CD8-positive, alpha-beta memory T cell (primary cell): ENCODE measurements at regions of chr17 and their contacts with region 1.

Region 1: GRCh38 chr17:38557836-38558727 is 47.7 kb downstream of the SRCIN1 start:
- DNase-seq: peak; percentile 82 to 89 (median 83)
- H3K4me3 ChIP-seq: peak overlapping the region; percentile 89
- H3K4me3 Mint-ChIP-seq: peak overlapping the region; percentile 93 to 99 (median 98)
- H3K27ac ChIP-seq: no peak overlapping the region
- H3K27ac Mint-ChIP-seq: peak overlapping the region in 5 of 8 donors; percentile 14 to 94 (median 82)
- H3K4me1 ChIP-seq: peaks cover 22% of the 10 kb centered on the region
- H3K4me1 Mint-ChIP-seq: peaks cover 22 to 39% (median 24%) of the 10 kb centered on the region in 3 donors
- H3K27me3 ChIP-seq: peaks cover 30% of the 10 kb centered on the region
- H3K27me3 Mint-ChIP-seq: peaks cover 27 to 29% of the 10 kb centered on the region in 2 donors

Region 2: GRCh38 chr17:38485146-38485468 is 73.0 kb before region 1 on chr17:
- CTCF ChIA-PET with region 1: no interaction called
- POLR2A ChIA-PET with region 1: no interaction called
- DNase-seq: no peak
- H3K4me3 ChIP-seq: no peak overlapping the region
- H3K4me3 Mint-ChIP-seq: peak overlapping the region in 4 of 7 donors; percentile 27 to 61 (median 50)
- H3K27ac ChIP-seq: no peak overlapping the region
- H3K27ac Mint-ChIP-seq: peak overlapping the region in 5 of 8 donors; percentile 8 to 84 (median 69)
- H3K4me1 ChIP-seq: no peaks in the 10 kb centered on the region
- H3K4me1 Mint-ChIP-seq: peaks cover 10 to 14% (median 12%) of the 10 kb centered on the region in 3 donors
- H3K27me3 ChIP-seq: no peaks in the 10 kb centered on the region
- H3K27me3 Mint-ChIP-seq: peaks cover 5 to 21% of the 10 kb centered on the region in 2 donors

Region 3: DNA sequence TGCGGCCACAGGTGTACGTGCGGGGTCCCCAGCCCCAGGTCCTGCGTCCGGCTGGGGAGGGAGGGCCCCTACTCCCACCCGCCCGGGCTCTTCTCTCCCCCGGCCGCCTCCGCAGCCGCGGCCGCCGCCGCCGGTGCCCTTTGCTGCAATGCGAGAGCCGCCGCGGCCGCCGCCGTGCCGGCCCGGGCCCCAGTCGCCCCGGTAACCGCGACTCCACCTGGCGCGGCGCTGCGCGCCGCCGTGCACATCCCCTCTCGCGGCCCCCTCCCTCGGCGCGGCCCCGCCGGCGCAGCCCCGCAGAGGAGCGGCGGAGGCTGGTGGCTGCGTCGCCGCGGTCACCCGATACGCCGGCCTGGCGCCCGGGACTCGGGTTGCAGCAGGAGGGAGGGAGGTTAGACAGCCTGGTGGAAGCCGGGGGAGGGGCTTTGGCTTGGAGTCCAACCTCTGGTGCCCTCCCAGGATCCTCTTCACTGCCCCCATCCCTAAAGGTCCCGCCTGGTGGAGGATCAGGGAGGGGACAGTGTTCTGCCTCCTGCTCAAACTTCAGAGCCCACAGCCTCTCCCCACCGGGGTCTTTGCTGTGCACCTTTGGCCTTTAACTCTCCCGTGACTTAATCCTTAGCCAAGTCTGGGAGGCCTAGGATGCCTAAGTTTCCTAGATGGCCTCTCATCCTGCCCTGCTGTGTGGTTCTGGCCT is 14.7 kb after region 1 on chr17:
- CTCF ChIA-PET with region 1: interaction called, 29 read pairs
- POLR2A ChIA-PET with region 1: no interaction called
- DNase-seq: no peak
- H3K4me3 ChIP-seq: no peak overlapping the region
- H3K4me3 Mint-ChIP-seq: peak overlapping the region in 6 of 7 donors; percentile 55 to 79 (median 66)
- H3K27ac ChIP-seq: no peak overlapping the region
- H3K27ac Mint-ChIP-seq: no peak overlapping the region
- H3K4me1 ChIP-seq: peaks cover 5% of the 10 kb centered on the region
- H3K4me1 Mint-ChIP-seq: peaks cover 8 to 12% (median 9%) of the 10 kb centered on the region in 3 donors
- H3K27me3 ChIP-seq: peaks cover 78% of the 10 kb centered on the region
- H3K27me3 Mint-ChIP-seq: peaks cover 83 to 89% of the 10 kb centered on the region in 2 donors

Region 4: DNA sequence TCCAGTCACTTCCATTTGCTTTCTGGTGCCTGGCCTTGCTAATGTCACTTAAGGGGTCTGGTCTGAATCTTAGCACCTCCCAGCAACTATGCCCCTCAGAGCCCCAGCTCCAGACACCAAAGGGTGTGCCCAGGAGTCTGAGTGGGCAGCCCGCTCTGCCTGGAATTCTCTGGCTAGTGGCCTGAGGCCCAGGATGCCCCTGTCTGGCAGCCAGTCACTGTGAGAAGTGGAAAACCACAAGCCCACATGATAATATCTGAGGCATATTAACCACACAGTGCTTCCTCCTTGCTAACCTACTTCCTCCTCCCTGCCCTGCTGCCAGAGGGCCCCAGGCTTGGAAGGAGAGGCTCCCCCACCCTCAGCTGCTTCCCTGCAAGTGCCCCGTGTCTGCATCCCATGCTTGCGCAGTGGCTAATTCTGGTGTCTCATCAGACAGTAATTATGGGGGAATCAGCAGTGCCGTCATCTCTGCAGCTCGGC is 33.7 kb after region 1 on chr17:
- CTCF ChIA-PET with region 1: interaction called, 128 read pairs
- POLR2A ChIA-PET with region 1: no interaction called
- DNase-seq: peak in 1 of 5 donors; percentile 30
- H3K4me3 ChIP-seq: no peak overlapping the region
- H3K4me3 Mint-ChIP-seq: peak overlapping the region in 6 of 7 donors; percentile 47 to 84 (median 57)
- H3K27ac ChIP-seq: no peak overlapping the region
- H3K27ac Mint-ChIP-seq: peak overlapping the region in 3 of 8 donors; percentile 33 to 63 (median 36)
- H3K4me1 ChIP-seq: peaks cover 20% of the 10 kb centered on the region
- H3K4me1 Mint-ChIP-seq: peaks cover 22 to 32% (median 29%) of the 10 kb centered on the region in 3 donors
- H3K27me3 ChIP-seq: peaks cover 57% of the 10 kb centered on the region
- H3K27me3 Mint-ChIP-seq: peaks cover 50 to 85% of the 10 kb centered on the region in 2 donors

Region 5: DNA sequence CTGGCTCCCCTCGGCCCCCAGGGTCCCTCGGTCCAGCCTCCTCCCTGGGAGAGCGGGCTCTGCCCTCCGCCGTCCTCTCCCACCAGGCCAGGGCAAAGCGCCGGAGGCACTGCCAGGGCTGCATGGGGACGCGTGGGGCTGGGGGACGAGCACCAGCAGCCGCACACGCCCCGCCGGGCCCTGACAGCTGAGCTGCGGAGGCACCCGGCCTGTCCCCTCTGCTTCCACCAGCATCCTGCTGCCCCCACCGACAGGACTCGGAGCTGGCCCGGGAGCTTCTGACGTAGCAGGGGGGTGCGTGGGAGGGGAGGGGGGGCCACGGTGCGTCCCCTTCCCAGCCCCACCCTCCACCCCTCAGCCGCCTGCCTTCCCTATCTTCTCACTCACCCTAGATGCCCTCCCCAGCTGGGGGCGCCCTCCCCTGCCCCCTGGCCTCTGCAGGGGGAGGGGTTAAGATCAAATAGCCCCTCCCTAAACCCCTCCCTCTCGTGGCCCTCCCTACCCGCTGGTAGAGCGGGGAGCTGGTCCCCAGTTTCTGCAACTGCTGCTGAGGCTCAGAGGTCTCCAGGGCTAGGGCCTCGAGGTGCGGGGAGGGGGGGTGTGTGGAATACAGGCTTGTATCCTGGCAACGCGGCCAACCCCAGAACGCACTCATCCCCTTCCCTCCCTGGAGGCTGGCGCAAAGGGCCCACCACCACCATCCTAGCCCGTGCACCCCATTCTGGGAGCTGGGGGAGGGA is 46.6 kb after region 1 on chr17:
- CTCF ChIA-PET with region 1: interaction called, 18 read pairs
- POLR2A ChIA-PET with region 1: no interaction called
- DNase-seq: peak in 1 of 5 donors; percentile 15
- H3K4me3 ChIP-seq: no peak overlapping the region
- H3K4me3 Mint-ChIP-seq: peak overlapping the region in 6 of 7 donors; percentile 36 to 66 (median 51)
- H3K27ac ChIP-seq: no peak overlapping the region
- H3K27ac Mint-ChIP-seq: peak overlapping the region in 1 of 8 donors; percentile 38
- H3K4me1 ChIP-seq: peaks cover 9% of the 10 kb centered on the region
- H3K4me1 Mint-ChIP-seq: peaks cover 8 to 36% (median 12%) of the 10 kb centered on the region in 3 donors
- H3K27me3 ChIP-seq: peaks cover 36% of the 10 kb centered on the region
- H3K27me3 Mint-ChIP-seq: peaks cover 42 to 71% of the 10 kb centered on the region in 2 donors

Region 6: DNA sequence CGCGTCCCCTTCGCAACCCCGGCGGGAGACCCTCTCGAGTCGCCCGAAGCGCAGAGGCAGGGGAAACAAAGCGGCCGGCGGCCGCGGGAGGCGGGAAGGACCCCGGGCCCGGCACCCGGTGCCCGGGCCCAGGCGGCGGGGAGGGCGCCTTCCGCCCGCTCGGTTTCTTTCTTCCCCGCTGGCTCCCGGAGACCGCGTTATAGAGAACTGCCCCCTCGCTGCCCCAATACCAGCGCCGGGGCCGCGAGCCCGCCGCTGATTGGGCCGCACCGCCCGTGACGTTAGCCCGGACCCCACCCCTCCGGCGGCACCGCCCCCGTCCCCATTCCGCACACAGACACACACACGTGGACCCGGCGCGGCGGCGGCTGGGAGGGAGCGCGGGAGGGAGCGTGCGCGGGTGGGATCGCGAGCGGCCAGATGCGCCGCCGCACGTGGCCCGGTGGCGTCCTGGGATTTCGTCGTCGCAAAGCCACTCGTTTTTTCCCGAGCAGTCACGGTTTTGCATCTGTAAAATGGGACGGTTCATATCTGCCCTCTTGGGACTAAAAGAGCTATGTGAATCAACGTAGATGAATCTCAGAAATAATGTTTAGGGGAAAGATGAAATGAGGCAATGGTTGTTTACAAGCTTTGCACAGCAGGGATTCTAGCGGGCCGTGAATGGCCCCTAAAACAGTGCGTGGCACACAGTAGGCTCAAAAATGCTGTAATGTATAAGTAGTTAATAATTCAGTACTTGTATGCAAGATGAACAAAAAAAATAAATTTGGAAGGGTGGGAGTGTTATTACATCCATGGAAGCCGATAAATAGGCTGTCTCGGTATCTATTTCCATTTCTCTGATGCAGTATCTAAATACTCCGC is 116.9 kb after region 1 on chr17 and contains the start of gene EPOP:
- CTCF ChIA-PET with region 1: interaction called, 69 read pairs
- POLR2A ChIA-PET with region 1: no interaction called
- DNase-seq: peak; percentile 75 to 82 (median 81)
- H3K4me3 ChIP-seq: peak within 1 kb of the TSS; percentile 5
- H3K4me3 Mint-ChIP-seq: peak within 1 kb of the TSS; percentile 49 to 83 (median 67)
- H3K27ac ChIP-seq: no peak within 1 kb of the TSS
- H3K27ac Mint-ChIP-seq: peak within 1 kb of the TSS in 2 of 8 donors; percentile 19 to 39
- H3K4me1 ChIP-seq: peaks cover 7% of the 10 kb centered on the region
- H3K4me1 Mint-ChIP-seq: peaks cover 13 to 21% (median 16%) of the 10 kb centered on the region in 3 donors
- H3K27me3 ChIP-seq: peaks cover 14% of the 10 kb centered on the region
- H3K27me3 Mint-ChIP-seq: peaks cover 25 to 43% of the 10 kb centered on the region in 2 donors
- total RNA-seq, gene EPOP: 47.0 to 50.0 TPM

Region 7: GRCh38 chr17:38735161-38735997 is 177.3 kb after region 1 on chr17:
- CTCF ChIA-PET with region 1: interaction called, 13 read pairs
- POLR2A ChIA-PET with region 1: interaction called, 3 read pairs
- DNase-seq: peak; percentile 59 to 83 (median 72)
- H3K4me3 ChIP-seq: no peak overlapping the region
- H3K4me3 Mint-ChIP-seq: peak overlapping the region in 1 of 7 donors; percentile 22
- H3K27ac ChIP-seq: no peak overlapping the region
- H3K27ac Mint-ChIP-seq: peak overlapping the region in 2 of 8 donors; percentile 26 to 99
- H3K4me1 ChIP-seq: peaks cover 23% of the 10 kb centered on the region
- H3K4me1 Mint-ChIP-seq: peaks cover 38 to 51% (median 42%) of the 10 kb centered on the region in 3 donors
- H3K27me3 ChIP-seq: no peaks in the 10 kb centered on the region
- H3K27me3 Mint-ChIP-seq: no peaks in the 10 kb centered on the region